OCI-LY7 (cell line): ENCODE measurements at regions of chr3 and their contacts with region 1.

Region 1: GRCh38 chr3:148943506-148944205 is 47.7 kb upstream of the GYG1 start:
- DNase-seq: peak; percentile 77
- H3K4me3 ChIP-seq: no peak overlapping the region
- H3K27ac ChIP-seq: no peak overlapping the region
- H3K4me1 ChIP-seq: no peaks in the 10 kb centered on the region
- CTCF ChIP-seq: peak; percentile 91

Region 2: GRCh38 chr3:148309390-148310035 is 634.1 kb before region 1 on chr3:
- CTCF ChIA-PET with region 1: no interaction called
- POLR2A ChIA-PET with region 1: no interaction called
- intact Hi-C with region 1: loop called (anchors 10 kb)
- DNase-seq: peak; percentile 52
- H3K4me3 ChIP-seq: no peak overlapping the region
- H3K27ac ChIP-seq: no peak overlapping the region
- H3K4me1 ChIP-seq: no peaks in the 10 kb centered on the region
- CTCF ChIP-seq: peak; percentile 87

Region 3: DNA sequence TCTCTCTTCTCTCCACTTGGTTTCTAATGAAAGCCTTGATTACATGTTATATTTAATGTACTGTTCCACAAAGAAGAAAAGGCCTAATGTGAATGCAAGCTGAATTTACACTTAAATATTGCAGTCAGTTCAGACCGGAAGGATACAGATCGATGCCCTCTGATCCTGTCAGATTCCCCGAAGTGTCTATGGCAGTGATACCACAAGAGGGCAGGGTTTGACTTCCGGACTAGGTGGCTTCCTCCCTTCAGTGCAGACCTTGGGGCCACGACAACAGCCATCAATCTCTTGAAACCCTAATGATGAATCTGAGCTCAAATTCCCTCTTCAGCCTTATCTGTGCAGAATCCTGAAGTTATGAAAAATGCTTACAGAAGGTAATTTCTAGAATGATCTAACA is 216.4 kb before region 1 on chr3:
- CTCF ChIA-PET with region 1: no interaction called
- POLR2A ChIA-PET with region 1: no interaction called
- intact Hi-C with region 1: loop called (anchors 10 kb)
- DNase-seq: peak; percentile 21
- H3K4me3 ChIP-seq: no peak overlapping the region
- H3K27ac ChIP-seq: no peak overlapping the region
- H3K4me1 ChIP-seq: no peaks in the 10 kb centered on the region
- CTCF ChIP-seq: peak; percentile 71

Region 4: DNA sequence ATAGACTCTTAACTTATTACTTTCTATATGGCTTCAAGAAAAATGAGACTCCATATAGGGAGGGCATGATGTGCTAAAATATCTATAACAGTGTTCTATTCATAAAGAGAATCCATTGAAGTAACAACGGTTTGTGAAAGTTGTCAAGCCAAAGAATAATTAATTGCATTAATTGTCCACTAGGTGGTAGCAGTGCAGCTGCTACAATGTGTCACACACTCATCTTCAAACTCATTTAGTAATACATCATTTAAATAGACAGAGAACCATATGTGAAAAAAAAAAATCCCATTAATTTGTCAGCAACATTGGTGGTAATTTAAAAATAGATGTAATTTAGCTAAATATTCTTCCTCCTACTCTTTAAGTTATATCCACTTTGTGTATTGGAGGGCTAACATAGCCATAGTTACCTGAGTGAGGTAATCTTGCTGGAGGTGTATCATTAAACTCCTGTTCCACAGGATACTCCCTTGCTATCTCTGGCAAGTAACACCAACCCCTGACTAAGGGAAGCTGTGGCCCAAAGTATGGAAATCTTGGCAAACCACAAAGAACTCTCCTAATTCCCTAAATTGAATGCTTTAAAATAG is 82.3 kb before region 1 on chr3:
- CTCF ChIA-PET with region 1: no interaction called
- POLR2A ChIA-PET with region 1: no interaction called
- intact Hi-C with region 1: loop called (anchors 1 kb)
- DNase-seq: peak; percentile 55
- H3K4me3 ChIP-seq: no peak overlapping the region
- H3K27ac ChIP-seq: no peak overlapping the region
- H3K4me1 ChIP-seq: no peaks in the 10 kb centered on the region
- CTCF ChIP-seq: peak; percentile 94

Region 5: DNA sequence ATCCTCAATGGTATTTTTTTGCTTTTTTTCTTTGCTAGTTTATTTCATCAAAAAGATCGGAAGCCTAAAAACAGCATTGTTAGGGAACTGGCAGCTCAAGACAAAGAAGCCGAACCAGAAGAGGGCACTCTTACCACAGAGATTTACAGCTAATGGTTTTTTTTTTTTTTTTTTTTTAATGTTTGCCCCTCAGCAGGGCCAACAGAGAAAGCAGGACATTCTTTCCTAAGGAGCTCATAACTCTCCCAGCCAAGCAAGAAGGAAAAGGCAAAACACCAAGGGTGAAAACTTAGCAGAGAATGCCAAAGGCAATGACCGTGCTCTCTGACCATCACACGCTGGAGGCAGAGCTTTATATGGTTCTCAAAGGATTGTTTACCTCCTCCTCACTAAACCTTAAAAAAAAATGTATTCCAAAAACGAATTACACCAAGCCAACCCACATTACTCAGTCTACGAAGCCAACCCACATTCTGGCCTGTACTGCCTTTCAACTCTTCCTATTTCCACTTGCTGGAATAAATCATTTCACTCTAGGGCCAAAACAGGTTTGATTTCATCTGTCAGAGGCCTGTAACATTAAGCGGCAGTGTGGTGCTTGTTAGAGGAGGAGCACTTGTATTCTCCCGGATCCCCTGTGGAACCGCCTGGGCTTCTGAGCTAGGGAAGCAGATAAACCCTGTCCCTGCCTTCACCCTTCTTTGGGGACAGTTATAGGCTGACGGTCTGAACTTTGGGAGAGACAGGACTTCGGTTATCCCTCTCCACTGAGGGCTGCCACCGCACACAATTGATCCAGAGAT is 12.1 kb after region 1 on chr3:
- CTCF ChIA-PET with region 1: no interaction called
- POLR2A ChIA-PET with region 1: no interaction called
- intact Hi-C with region 1: no loop called
- DNase-seq: peak; percentile 70
- H3K4me3 ChIP-seq: no peak overlapping the region
- H3K27ac ChIP-seq: no peak overlapping the region
- H3K4me1 ChIP-seq: peaks cover 3% of the 10 kb centered on the region
- CTCF ChIP-seq: peak; percentile 91